ENCODE measurements at regions of chr1 and their contacts with region 1.

Region 1: GRCh38 chr1:40553017-40553416 is 21.6 kb downstream of the ZNF684 start:
- DNase-seq: no peak
- H3K4me3 ChIP-seq: no peak overlapping the region
- H3K27ac ChIP-seq: no peak overlapping the region
- H3K4me1 ChIP-seq: no peaks in the 10 kb centered on the region
- H3K27me3 ChIP-seq: no peaks in the 10 kb centered on the region
- CTCF ChIP-seq: no peak

Region 2: DNA sequence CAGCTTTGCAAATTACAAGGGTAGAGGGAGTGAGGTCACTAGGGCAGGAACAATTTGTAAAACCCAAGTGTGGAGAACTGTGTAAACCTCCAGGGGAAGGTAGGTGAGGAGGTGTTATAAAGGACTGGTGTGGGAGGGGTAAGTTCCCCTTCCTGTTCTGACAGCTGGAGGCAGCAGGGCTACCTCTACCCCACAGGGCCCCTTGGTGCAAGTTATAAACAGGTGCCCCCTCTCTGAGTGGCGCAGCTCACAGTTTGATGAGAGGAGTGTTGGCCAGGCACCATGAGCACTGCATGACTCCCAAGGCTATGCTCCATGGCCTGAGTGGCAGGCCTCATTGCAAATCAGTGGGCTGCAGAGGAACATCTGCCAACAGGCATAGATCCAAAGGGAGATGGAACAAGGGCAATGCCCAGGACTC is 557.0 kb before region 1 on chr1:
- CTCF ChIA-PET with region 1: no interaction called
- POLR2A ChIA-PET with region 1: no interaction called
- intact Hi-C with region 1: no loop called
- DNase-seq: no peak
- H3K4me3 ChIP-seq: no peak overlapping the region
- H3K27ac ChIP-seq: no peak overlapping the region
- H3K4me1 ChIP-seq: peaks cover 2% of the 10 kb centered on the region
- H3K27me3 ChIP-seq: no peaks in the 10 kb centered on the region
- CTCF ChIP-seq: no peak

Region 3: DNA sequence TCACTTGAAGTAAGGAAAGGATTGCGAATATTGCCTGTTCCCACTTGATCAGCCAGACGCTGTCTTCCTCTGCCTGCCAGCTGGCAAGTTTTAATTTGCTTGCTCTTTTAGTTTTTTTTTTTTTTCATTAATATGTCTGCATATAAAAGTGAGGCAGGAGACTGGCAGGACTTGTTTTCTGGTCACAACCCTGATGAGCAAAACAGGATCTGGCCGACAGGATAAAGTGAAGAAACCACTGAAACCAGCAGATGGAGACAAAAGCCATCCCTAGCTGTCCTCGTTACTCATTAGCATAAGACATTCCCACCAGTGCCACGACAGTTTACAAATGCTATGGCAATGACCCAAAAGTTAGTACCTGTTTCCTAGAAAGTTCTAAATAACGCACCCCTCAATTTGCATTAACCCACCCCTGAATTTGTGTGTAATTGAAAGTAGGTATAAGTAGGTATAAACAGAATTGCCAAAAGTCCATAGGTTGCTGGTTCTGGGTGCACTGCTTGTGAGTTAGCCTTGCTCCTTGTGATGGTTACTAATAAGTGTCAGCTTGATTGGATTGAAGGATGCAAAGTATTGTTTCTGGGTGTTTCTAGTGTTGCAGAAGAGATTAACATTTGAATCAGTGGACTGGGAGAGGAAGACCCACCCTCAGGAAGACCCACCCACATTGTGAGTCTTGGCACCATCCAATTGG is 39.2 kb after region 1 on chr1:
- CTCF ChIA-PET with region 1: interaction called, 16 read pairs
- POLR2A ChIA-PET with region 1: no interaction called
- intact Hi-C with region 1: no loop called
- DNase-seq: peak; percentile 58 to 60
- H3K4me3 ChIP-seq: no peak overlapping the region
- H3K27ac ChIP-seq: no peak overlapping the region
- H3K4me1 ChIP-seq: no peaks in the 10 kb centered on the region
- H3K27me3 ChIP-seq: no peaks in the 10 kb centered on the region
- CTCF ChIP-seq: peak; percentile 63